ENCODE measurements at regions of chr11 and their contacts with region 1.

Region 1: GRCh38 chr11:123478352-123478987 is 48.4 kb downstream of the GRAMD1B start:
- DNase-seq: peak in 1 of 2 donors; percentile 79
- ATAC-seq: peak; percentile 53 to 63 (median 54)
- H3K4me3 ChIP-seq: no peak overlapping the region
- H3K4me3 Mint-ChIP-seq: peak overlapping the region; percentile 21
- H3K27ac ChIP-seq: no peak overlapping the region
- H3K27ac Mint-ChIP-seq: peak overlapping the region in 1 of 2 donors; percentile 15
- H3K4me1 ChIP-seq: peaks cover 42% of the 10 kb centered on the region
- H3K4me1 Mint-ChIP-seq: peaks cover 32 to 33% of the 10 kb centered on the region in 2 donors
- H3K27me3 ChIP-seq: no peaks in the 10 kb centered on the region
- H3K27me3 Mint-ChIP-seq: peaks cover 0 to 8% of the 10 kb centered on the region in 2 donors
- CTCF ChIP-seq: peak; percentile 77

Region 2: DNA sequence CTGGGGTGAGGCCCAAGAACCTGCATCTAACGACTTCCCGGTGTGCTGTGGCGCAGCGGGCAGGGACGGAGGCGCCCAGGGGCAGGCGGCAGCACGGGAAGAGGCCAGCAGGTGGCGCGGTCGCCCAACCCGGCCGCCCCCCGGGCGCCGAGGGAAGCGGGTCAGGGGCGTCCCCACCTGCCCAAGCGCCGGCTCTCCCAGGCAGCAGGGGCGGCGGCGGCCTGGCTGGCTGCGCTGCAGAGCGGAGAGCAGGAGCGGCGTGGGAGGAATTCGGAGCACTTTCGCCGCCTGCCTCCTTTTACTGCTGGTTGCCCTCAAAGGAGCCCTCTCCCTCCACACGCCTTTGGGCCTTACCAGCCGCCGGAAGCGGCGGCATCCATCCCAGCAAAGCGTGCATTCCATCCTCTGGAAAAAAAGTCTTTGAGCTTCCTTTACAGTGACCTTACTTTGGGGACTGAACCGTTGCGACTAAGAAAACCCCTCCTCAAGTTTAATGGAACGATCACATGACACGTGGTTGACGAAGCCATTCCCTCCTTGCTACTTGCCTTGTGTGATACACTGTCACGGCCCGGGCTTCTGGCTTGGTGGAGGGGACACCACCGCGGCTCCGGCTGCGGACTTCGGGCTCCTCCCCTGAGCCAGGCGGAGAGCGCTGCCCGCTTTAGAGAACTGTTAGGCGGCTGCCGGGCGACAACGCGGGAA is 176.6 kb before region 1 on chr11:
- intact Hi-C with region 1: loop called (anchors 1 kb)
- DNase-seq: peak; percentile 66 to 82
- ATAC-seq: peak; percentile 83 to 95 (median 93)
- H3K4me3 ChIP-seq: peak overlapping the region; percentile 21
- H3K4me3 Mint-ChIP-seq: peak overlapping the region; percentile 69
- H3K27ac ChIP-seq: no peak overlapping the region
- H3K27ac Mint-ChIP-seq: no peak overlapping the region
- H3K4me1 ChIP-seq: peaks cover 34% of the 10 kb centered on the region
- H3K4me1 Mint-ChIP-seq: peaks cover 24 to 25% of the 10 kb centered on the region in 2 donors
- H3K27me3 ChIP-seq: peaks cover 3% of the 10 kb centered on the region
- H3K27me3 Mint-ChIP-seq: peaks cover 6 to 33% of the 10 kb centered on the region in 2 donors
- CTCF ChIP-seq: peak; percentile 94

Region 3: DNA sequence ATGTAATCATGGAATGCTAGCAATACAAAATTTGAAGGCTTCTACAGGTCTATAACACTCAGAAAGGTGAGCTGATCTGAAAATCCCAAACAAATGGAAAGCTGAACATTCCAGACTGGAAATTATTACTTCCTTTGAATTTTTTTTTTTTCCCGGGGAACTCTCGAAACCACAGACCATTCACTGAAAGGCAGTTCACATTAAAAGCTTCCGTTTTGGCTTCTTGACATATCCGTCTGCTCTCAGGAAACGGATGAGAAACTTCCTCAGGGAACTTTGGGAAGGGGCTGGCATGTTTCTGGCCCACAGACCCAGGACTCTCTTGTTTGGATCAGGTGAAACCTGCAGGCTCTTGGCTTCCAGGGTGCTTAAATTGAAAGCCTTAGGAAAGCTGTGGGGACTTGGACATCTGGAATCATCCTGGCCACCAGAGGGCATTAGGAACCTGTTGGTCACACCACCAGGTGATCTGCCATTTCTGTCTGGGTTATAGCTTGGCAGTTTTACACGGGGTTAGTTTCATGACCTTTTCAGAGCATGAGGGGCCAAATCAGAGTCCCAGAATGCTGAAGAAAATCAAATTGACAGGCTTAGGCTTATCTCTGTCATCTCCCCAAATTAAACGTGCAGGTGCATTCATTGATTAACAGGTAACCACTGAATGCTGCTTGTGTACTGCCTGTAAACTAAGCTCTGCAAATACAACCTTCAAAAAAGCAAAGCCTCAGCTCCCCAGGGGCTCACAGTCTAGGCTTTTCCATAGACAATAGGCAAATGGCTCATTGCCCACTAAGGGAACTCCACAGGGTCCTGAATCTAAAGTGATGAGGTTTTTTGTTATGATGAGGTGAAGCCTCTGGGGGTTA is 71.1 kb before region 1 on chr11:
- intact Hi-C with region 1: loop called (anchors 1 kb)
- DNase-seq: peak; percentile 22 to 86
- ATAC-seq: peak; percentile 50 to 66 (median 65)
- H3K4me3 ChIP-seq: no peak overlapping the region
- H3K4me3 Mint-ChIP-seq: peak overlapping the region; percentile 19
- H3K27ac ChIP-seq: no peak overlapping the region
- H3K27ac Mint-ChIP-seq: no peak overlapping the region
- H3K4me1 ChIP-seq: peaks cover 6% of the 10 kb centered on the region
- H3K4me1 Mint-ChIP-seq: peaks cover 8 to 15% of the 10 kb centered on the region in 2 donors
- H3K27me3 ChIP-seq: peaks cover 2% of the 10 kb centered on the region
- H3K27me3 Mint-ChIP-seq: peaks cover 4 to 17% of the 10 kb centered on the region in 2 donors
- CTCF ChIP-seq: peak; percentile 52

Region 4: DNA sequence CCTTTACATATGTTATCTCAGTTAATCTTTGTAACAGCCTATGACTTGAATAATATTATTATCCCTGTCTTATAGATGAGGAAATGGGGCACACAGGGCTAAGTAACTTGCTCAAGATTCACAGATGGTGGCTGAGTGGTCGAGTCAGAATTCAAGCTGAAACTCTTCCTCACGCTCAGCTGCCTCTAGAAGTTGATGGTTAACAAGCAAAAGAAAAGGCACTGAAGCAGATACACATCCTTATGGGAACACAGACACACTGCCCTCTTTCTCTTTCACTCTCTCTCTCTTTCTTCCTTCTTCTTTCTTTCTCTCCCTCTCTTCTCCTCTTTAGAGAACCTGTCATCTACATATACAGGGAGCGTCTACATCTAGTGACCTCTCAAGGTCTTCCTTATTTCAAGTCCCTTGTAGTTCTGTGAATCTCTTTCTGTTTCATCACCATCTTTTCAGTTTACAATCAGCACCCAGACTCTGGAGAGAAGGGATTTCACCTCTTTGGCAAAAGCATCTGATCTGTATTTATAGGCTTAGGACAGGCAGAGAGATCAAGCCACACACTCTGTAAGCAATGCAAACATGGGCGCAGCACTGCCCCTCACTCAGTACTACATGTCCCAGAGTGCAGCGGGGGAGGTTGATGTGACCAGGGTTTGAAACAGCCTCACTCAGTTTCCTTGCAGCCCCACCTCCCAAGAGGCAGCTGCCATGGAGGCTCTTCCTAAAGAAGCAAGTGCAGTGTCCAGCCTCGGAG is 27.3 kb after region 1 on chr11:
- intact Hi-C with region 1: no loop called
- DNase-seq: no peak
- ATAC-seq: no peak
- H3K4me3 ChIP-seq: no peak overlapping the region
- H3K4me3 Mint-ChIP-seq: no peak overlapping the region
- H3K27ac ChIP-seq: no peak overlapping the region
- H3K27ac Mint-ChIP-seq: no peak overlapping the region
- H3K4me1 ChIP-seq: no peaks in the 10 kb centered on the region
- H3K4me1 Mint-ChIP-seq: peaks cover 0 to 12% of the 10 kb centered on the region in 2 donors
- H3K27me3 ChIP-seq: no peaks in the 10 kb centered on the region
- H3K27me3 Mint-ChIP-seq: no peaks in the 10 kb centered on the region
- CTCF ChIP-seq: no peak

Region 5: GRCh38 chr11:123654566-123655081 is 176.2 kb after region 1 on chr11 and contains the start of gene SCN3B:
- intact Hi-C with region 1: no loop called
- DNase-seq: no peak
- ATAC-seq: peak in 2 of 3 donors; percentile 41 to 45
- H3K4me3 ChIP-seq: peak within 1 kb of the TSS; percentile 25
- H3K4me3 Mint-ChIP-seq: peak within 1 kb of the TSS; percentile 61
- H3K27ac ChIP-seq: no peak within 1 kb of the TSS
- H3K27ac Mint-ChIP-seq: no peak within 1 kb of the TSS
- H3K4me1 ChIP-seq: peaks cover 13% of the 10 kb centered on the region
- H3K4me1 Mint-ChIP-seq: peaks cover 11 to 13% of the 10 kb centered on the region in 2 donors
- H3K27me3 ChIP-seq: peaks cover 25% of the 10 kb centered on the region
- H3K27me3 Mint-ChIP-seq: peaks cover 33 to 34% of the 10 kb centered on the region in 2 donors
- CTCF ChIP-seq: no peak
- total RNA-seq, gene SCN3B: not detected

Region 6: GRCh38 chr11:123973816-123974215 is 495.3 kb after region 1 on chr11:
- intact Hi-C with region 1: no loop called
- DNase-seq: no peak
- ATAC-seq: no peak
- H3K4me3 ChIP-seq: no peak overlapping the region
- H3K4me3 Mint-ChIP-seq: no peak overlapping the region
- H3K27ac ChIP-seq: no peak overlapping the region
- H3K27ac Mint-ChIP-seq: no peak overlapping the region
- H3K4me1 ChIP-seq: no peaks in the 10 kb centered on the region
- H3K4me1 Mint-ChIP-seq: no peaks in the 10 kb centered on the region
- H3K27me3 ChIP-seq: no peaks in the 10 kb centered on the region
- H3K27me3 Mint-ChIP-seq: no peaks in the 10 kb centered on the region
- CTCF ChIP-seq: no peak